Endothelial cell of umbilical vein (primary cell): ENCODE measurements at regions of chr17 and their contacts with region 1.

Region 1: DNA sequence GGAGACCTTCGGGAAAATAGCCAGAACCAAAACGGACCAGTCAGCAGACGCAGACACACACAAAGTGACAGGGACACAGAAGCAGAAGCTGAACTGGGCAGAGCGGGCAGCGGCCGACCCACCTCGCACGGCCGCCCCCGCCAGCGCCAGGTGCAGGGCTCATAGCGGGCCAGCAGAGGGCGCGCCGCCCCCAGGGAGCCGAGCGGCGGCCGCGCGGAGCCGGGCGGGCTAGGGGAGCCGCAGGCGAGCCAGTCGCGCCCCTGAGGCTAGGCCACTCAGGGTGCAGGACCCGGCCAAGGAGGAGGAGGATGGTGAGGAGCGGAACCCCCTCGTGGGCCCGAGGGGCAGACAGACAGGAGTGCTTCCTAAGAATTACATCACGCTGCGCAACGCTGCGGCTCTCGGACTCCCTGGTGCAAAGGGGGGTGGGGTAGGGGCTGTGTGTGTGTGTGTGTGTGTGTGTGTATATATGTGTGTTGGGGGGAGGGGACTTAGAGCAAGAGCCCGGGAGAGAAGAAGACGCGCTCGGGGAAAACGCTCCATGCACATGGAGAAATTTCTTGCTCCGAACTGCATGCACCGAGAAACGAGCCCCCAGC is 913 bp upstream of the NOG start:
- DNase-seq: peak; percentile 45
- H3K4me3 ChIP-seq: peak overlapping the region; percentile 46 to 66 (median 48)
- H3K27ac ChIP-seq: no peak overlapping the region
- H3K4me1 ChIP-seq: peaks cover 21% of the 10 kb centered on the region
- H3K27me3 ChIP-seq: peaks cover 41 to 54% of the 10 kb centered on the region in 2 experiments
- CTCF ChIP-seq: peak; percentile 77 to 88
- POLR2A ChIP-seq: no peak

Region 2: DNA sequence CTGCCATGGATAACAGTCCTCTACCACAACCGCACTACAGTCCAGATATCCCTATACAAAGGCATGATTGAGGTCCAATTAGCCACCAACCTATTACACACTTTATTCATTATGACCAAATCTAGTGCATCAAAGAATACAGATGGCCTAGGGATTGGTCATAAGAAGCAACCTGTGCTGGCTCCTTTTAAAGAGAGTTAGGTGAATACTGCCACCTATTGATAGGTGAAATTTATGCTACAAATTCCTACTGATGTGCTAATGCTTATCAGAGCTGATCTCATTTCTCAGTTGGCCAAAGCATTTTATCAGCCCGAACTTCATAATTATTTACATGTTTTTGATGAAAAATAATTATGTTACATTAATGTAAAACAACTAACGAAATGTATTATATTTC is 273.1 kb before region 1 on chr17:
- CTCF ChIA-PET with region 1: interaction called, 3 read pairs
- POLR2A ChIA-PET with region 1: no interaction called
- dilution Hi-C with region 1: no loop called
- intact Hi-C with region 1: loop called (anchors 10 kb)
- DNase-seq: peak; percentile 64
- H3K4me3 ChIP-seq: no peak overlapping the region
- H3K27ac ChIP-seq: no peak overlapping the region
- H3K4me1 ChIP-seq: peaks cover 17% of the 10 kb centered on the region
- H3K27me3 ChIP-seq: peaks cover 23 to 35% of the 10 kb centered on the region in 2 experiments
- CTCF ChIP-seq: peak; percentile 40 to 52
- POLR2A ChIP-seq: no peak

Region 3: DNA sequence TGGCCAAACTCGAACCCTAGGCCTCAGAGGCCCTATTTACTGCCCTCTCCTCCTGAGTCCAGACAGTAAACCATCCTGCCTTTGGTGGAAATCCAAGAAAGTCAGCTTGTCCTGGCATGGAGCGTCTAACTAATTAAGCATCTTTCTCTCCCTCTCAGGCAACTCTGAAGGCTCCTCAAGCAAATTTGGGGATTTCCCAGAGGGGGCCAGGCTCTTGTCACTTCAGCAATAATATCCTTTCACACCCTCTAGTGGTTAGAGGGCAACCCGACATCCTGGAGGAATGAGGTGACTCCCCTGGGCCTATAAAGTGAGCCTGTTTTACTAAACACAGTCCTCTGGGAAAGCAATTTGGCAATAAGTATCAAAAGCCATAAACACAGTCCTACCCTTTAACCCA is 61.3 kb after region 1 on chr17:
- CTCF ChIA-PET with region 1: interaction called, 12 read pairs
- POLR2A ChIA-PET with region 1: no interaction called
- dilution Hi-C with region 1: no loop called
- intact Hi-C with region 1: loop called (anchors 1 kb)
- DNase-seq: peak; percentile 33
- H3K4me3 ChIP-seq: no peak overlapping the region
- H3K27ac ChIP-seq: no peak overlapping the region
- H3K4me1 ChIP-seq: no peaks in the 10 kb centered on the region
- H3K27me3 ChIP-seq: peaks cover under 1 to 8% of the 10 kb centered on the region in 2 experiments
- CTCF ChIP-seq: peak; percentile 27 to 33
- POLR2A ChIP-seq: no peak

Region 4: DNA sequence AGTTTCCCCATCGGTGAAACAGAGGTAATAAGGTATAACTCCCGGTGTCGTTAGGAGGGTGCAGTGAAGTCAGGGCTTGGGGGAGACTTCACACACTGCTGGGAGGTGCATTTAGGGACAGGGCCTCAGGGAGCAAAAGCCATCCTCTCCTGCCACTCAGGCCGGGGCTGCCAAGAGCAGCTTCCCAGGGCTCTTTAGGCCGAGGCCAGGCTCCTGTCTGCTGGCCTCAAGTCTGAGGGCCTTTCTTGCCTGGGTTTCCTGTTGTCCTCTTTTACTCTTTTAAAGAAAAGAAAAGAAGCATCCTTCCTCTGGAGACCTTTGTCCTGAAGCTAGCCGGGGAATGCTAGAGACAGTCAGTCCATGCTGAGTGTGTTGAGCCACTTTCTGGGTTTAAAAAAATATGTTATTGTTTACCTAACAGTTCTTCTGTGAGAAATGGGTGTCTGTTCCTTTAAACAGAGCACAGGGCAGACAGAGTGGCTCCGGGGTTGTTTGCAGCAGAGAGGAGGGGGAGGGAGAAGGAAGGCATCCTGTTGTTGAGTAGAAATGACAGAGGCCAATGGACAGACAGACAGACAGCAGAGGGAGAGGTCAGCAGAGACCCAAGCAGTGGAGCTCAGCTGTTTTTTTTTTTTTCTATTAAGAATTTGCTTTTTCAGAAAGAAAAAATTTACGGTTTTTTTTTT is 162.1 kb after region 1 on chr17:
- CTCF ChIA-PET with region 1: interaction called, 5 read pairs
- POLR2A ChIA-PET with region 1: no interaction called
- dilution Hi-C with region 1: no loop called
- intact Hi-C with region 1: loop called (anchors 1 kb)
- DNase-seq: peak; percentile 53
- H3K4me3 ChIP-seq: no peak overlapping the region
- H3K27ac ChIP-seq: peak overlapping the region; percentile 86
- H3K4me1 ChIP-seq: peaks cover 47% of the 10 kb centered on the region
- H3K27me3 ChIP-seq: no peaks in the 10 kb centered on the region
- CTCF ChIP-seq: no peak
- POLR2A ChIP-seq: no peak

Region 5: DNA sequence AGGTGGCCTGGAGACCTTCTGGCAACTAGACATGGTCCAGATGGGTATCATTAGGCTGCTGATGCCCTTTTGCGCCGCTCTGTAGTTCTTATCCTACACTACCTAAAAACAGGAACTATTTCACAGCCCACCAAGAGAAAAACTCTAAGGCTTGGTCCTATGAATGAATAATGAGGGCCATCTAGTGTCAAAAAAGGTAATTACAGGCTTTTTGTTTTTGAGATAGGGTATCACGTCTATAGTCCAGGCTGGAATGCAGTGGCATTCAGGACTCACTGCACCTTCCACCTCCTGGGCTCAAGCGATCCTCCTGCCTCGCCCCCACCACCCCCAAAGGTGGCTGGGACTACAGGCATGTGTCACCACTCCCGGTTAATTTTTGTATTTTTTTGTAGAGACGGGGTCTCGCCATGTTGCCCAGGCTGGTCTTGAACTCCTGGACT is 347.3 kb after region 1 on chr17:
- CTCF ChIA-PET with region 1: interaction called, 4 read pairs
- POLR2A ChIA-PET with region 1: no interaction called
- dilution Hi-C with region 1: no loop called
- intact Hi-C with region 1: loop called (anchors 1 kb)
- DNase-seq: peak; percentile 77
- H3K4me3 ChIP-seq: no peak overlapping the region
- H3K27ac ChIP-seq: peak overlapping the region; percentile 35
- H3K4me1 ChIP-seq: peaks cover 24% of the 10 kb centered on the region
- H3K27me3 ChIP-seq: no peaks in the 10 kb centered on the region
- CTCF ChIP-seq: peak; percentile 51 to 53
- POLR2A ChIP-seq: no peak